Naive thymus-derived CD4-positive, alpha-beta T cell (primary cell): ENCODE measurements at regions of chr10 and their contacts with region 1.

Region 1: DNA sequence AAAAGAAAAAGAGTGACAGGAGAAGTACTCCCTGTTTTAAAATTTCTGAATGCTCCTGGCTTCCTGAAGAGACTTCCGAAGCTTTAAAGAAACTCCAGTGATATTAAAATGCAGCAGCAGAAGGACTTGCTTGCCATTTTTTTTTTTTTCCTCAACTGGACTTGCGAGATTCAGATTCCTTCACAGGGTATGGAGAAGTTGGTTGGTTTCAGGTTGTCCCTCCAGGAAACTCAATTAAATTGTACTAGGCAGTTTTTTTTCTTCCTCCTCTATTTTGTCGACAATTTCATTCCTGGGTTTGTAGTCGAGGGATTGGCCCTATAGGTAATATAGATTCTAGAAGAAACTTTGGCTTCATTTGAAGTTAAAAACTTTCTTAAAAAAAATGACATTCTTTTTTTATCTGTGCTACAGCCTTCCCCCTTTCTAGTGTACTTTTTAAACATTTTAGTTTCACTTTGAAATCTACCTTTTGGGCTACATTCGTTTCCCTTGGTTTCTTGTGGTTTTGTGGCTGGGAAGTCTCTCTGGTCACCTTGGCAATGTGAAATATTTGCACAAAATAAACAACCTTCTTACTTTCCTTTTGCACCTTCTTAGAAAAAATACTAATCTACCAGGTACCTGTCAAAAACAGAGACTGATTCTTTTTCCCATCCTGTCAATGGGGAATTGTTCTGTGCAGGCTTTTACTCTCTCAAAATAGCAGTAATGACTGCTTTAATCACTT is 350.1 kb downstream of the GATA3 start:
- DNase-seq: peak in 7 of 9 donors; percentile 78 to 93 (median 89)
- ATAC-seq: peak; percentile 85
- H3K4me3 ChIP-seq: peak overlapping the region; percentile 47
- H3K4me3 Mint-ChIP-seq: peak overlapping the region; percentile 30 to 88 (median 76)
- H3K27ac ChIP-seq: peak overlapping the region; percentile 74
- H3K27ac Mint-ChIP-seq: peak overlapping the region; percentile 86 to 98 (median 93)
- H3K4me1 ChIP-seq: peaks cover 59 to 60% of the 10 kb centered on the region in 2 donors
- H3K4me1 Mint-ChIP-seq: peaks cover 35 to 78% (median 73%) of the 10 kb centered on the region in 7 donors
- H3K27me3 ChIP-seq: no peaks in the 10 kb centered on the region
- H3K27me3 Mint-ChIP-seq: peaks cover 0 to 10% (median 0%) of the 10 kb centered on the region in 5 donors

Region 2: DNA sequence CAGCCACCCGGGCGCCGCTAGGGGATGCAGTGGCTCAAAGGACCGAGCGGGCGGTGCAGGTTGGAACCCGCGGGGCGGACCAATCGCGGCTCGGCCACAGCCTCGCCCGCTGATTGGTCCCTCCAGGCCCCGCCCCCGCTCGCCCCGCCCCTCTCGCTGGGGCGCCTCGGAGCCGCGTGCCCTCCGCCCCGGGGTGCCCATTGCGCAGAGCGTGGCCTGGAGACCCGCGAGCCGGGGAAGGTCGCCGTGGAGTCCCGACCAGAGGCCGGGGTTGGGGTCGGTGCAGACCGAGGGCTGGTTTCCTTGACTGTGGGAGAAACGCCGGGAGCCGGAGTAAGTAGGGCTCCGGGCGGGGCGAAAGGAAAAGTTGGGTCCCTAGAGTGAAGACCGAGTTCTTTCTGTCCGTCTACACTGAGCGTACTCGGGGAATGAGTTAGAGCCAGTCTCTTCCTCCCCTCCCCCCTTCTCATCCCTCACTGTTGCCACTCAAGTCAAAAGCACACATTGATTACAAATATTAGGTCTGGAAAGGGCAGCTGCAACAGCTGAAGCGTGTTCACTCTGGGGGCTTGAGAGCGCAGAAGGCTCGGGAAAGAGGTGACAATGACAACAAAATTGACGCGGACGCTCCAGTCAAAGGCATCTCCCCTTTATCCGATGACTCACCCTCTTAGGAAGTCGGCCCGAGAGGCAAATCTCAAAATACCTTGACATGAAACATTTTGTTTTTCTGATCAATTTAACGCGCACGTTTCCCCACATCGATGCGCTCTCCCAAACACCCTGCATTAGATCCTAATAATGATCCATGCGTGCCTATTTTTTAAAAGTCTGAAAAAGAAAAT is 350.9 kb before region 1 on chr10:
- CTCF ChIA-PET with region 1: no interaction called
- POLR2A ChIA-PET with region 1: no interaction called
- intact Hi-C with region 1: loop called (anchors 1 kb)
- DNase-seq: peak; percentile 73 to 97 (median 89)
- ATAC-seq: peak; percentile 77
- H3K4me3 ChIP-seq: peak overlapping the region; percentile 87
- H3K4me3 Mint-ChIP-seq: peak overlapping the region; percentile 87 to 97 (median 94)
- H3K27ac ChIP-seq: peak overlapping the region; percentile 82
- H3K27ac Mint-ChIP-seq: peak overlapping the region; percentile 88 to 99 (median 95)
- H3K4me1 ChIP-seq: peaks cover 26 to 42% of the 10 kb centered on the region in 2 donors
- H3K4me1 Mint-ChIP-seq: peaks cover 14 to 45% (median 37%) of the 10 kb centered on the region in 7 donors
- H3K27me3 ChIP-seq: peaks cover 19 to 32% of the 10 kb centered on the region in 2 donors
- H3K27me3 Mint-ChIP-seq: peaks cover 20 to 30% (median 22%) of the 10 kb centered on the region in 5 donors

Region 3: GRCh38 chr10:8137726-8138125 is 266.8 kb before region 1 on chr10:
- CTCF ChIA-PET with region 1: no interaction called
- POLR2A ChIA-PET with region 1: no interaction called
- intact Hi-C with region 1: loop called in 1 of 2 experiments (anchors 1 kb)
- DNase-seq: peak in 1 of 9 donors; percentile 25
- ATAC-seq: peak; percentile 40
- H3K4me3 ChIP-seq: peak overlapping the region; percentile 63
- H3K4me3 Mint-ChIP-seq: peak overlapping the region; percentile 84 to 95 (median 88)
- H3K27ac ChIP-seq: peak overlapping the region; percentile 72
- H3K27ac Mint-ChIP-seq: peak overlapping the region; percentile 86 to 98 (median 93)
- H3K4me1 ChIP-seq: peaks cover 3 to 18% of the 10 kb centered on the region in 2 donors
- H3K4me1 Mint-ChIP-seq: peaks cover 24 to 65% (median 39%) of the 10 kb centered on the region in 7 donors
- H3K27me3 ChIP-seq: no peaks in the 10 kb centered on the region
- H3K27me3 Mint-ChIP-seq: peaks cover 0 to 14% (median 10%) of the 10 kb centered on the region in 5 donors

Region 4: DNA sequence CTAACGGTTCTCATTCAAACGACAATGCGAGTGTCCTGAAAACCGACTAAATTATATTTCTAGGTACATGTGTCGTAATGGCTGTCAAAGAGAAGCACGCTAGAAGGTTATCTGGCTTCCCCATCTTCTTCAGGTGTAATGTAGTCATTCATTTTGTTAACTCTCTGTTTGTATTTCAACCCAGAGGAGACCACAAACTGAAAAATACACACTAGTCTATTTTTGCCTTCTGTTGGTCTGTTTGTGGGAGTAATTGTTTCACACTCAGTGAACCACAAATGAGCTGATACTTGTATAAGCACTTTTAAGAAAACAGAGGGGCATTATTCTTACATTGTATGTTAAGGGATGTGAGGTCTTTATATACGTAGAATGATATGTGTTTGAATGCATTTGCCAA is 44.2 kb before region 1 on chr10:
- CTCF ChIA-PET with region 1: no interaction called
- POLR2A ChIA-PET with region 1: no interaction called
- intact Hi-C with region 1: loop called in 1 of 2 experiments (anchors 5 kb)
- DNase-seq: no peak
- ATAC-seq: peak; percentile 45
- H3K4me3 ChIP-seq: no peak overlapping the region
- H3K4me3 Mint-ChIP-seq: peak overlapping the region in 1 of 10 donors; percentile 39
- H3K27ac ChIP-seq: no peak overlapping the region
- H3K27ac Mint-ChIP-seq: peak overlapping the region in 1 of 9 donors; percentile 72
- H3K4me1 ChIP-seq: peaks cover 11 to 26% of the 10 kb centered on the region in 2 donors
- H3K4me1 Mint-ChIP-seq: peaks cover 13 to 40% (median 18%) of the 10 kb centered on the region in 7 donors
- H3K27me3 ChIP-seq: no peaks in the 10 kb centered on the region
- H3K27me3 Mint-ChIP-seq: peaks cover 0 to 15% (median 0%) of the 10 kb centered on the region in 5 donors

Region 5: GRCh38 chr10:8416192-8416701 is 11.7 kb after region 1 on chr10:
- CTCF ChIA-PET with region 1: no interaction called
- POLR2A ChIA-PET with region 1: interaction called, 6 read pairs
- intact Hi-C with region 1: loop called in 1 of 2 experiments (anchors 1 kb)
- DNase-seq: peak in 1 of 9 donors; percentile 28
- ATAC-seq: peak; percentile 92
- H3K4me3 ChIP-seq: no peak overlapping the region
- H3K4me3 Mint-ChIP-seq: peak overlapping the region in 2 of 10 donors; percentile 4 to 53
- H3K27ac ChIP-seq: no peak overlapping the region
- H3K27ac Mint-ChIP-seq: peak overlapping the region in 5 of 9 donors; percentile 0 to 92 (median 65)
- H3K4me1 ChIP-seq: peaks cover 0 to 30% of the 10 kb centered on the region in 2 donors
- H3K4me1 Mint-ChIP-seq: peaks cover 0 to 31% (median 13%) of the 10 kb centered on the region in 7 donors
- H3K27me3 ChIP-seq: no peaks in the 10 kb centered on the region
- H3K27me3 Mint-ChIP-seq: peaks cover 0 to 14% (median 0%) of the 10 kb centered on the region in 5 donors

Region 6: DNA sequence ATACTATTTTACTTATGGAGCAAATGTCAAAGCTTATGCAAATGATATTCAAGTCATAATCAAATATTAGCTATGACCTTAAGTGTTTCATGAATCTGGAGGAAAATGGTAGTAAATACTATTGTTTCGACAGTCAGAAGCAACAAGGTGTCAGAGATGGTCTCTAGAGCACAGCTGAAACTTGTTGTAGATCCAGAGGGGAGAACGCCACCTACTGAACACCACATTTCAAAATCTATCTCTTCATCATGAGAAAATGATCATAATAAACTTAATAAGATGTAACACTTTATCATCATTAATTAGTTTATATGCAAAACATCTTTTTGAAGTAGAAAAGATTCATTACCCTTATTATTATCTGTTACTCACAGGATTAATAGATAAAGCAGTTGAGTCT is 68.6 kb after region 1 on chr10:
- CTCF ChIA-PET with region 1: no interaction called
- POLR2A ChIA-PET with region 1: no interaction called
- intact Hi-C with region 1: loop called (anchors 2 kb)
- DNase-seq: peak in 7 of 9 donors; percentile 8 to 61 (median 36)
- ATAC-seq: peak; percentile 51
- H3K4me3 ChIP-seq: no peak overlapping the region
- H3K4me3 Mint-ChIP-seq: no peak overlapping the region
- H3K27ac ChIP-seq: no peak overlapping the region
- H3K27ac Mint-ChIP-seq: no peak overlapping the region
- H3K4me1 ChIP-seq: no peaks in the 10 kb centered on the region
- H3K4me1 Mint-ChIP-seq: peaks cover 0 to 3% (median 0%) of the 10 kb centered on the region in 7 donors
- H3K27me3 ChIP-seq: no peaks in the 10 kb centered on the region
- H3K27me3 Mint-ChIP-seq: peaks cover 8 to 46% (median 25%) of the 10 kb centered on the region in 5 donors